Breast epithelium (tissue), 4 donors: ENCODE measurements at regions of chr4 and their contacts with region 1.

Region 1: DNA sequence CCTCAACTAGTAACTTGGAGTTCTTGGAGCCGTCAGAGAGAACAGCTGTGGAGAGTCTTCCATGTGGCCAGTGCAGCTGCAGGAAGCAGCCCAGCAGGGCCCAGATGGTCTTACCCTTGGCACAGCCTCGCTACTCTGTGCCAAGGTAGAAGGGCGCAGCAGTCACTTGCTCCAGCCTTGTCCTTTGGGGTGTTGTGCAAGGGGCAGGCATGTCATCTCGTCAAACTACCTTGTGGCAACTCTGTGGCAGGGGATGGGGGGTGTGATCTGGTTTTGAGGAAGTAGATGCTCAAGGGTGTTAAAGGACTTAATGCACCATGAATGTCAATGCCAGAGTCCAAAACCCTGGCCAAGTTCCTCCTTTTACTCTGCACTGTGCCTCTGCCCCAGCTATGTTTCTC is 34.2 kb upstream of the TBC1D14 start:
- DNase-seq: peak in 1 of 2 donors; percentile 32
- H3K4me3 ChIP-seq: no peak overlapping the region
- H3K27ac ChIP-seq: no peak overlapping the region
- H3K4me1 ChIP-seq: no peaks in the 10 kb centered on the region
- H3K27me3 ChIP-seq: no peaks in the 10 kb centered on the region
- CTCF ChIP-seq: no peak
- POLR2A ChIP-seq: no peak

Region 2: DNA sequence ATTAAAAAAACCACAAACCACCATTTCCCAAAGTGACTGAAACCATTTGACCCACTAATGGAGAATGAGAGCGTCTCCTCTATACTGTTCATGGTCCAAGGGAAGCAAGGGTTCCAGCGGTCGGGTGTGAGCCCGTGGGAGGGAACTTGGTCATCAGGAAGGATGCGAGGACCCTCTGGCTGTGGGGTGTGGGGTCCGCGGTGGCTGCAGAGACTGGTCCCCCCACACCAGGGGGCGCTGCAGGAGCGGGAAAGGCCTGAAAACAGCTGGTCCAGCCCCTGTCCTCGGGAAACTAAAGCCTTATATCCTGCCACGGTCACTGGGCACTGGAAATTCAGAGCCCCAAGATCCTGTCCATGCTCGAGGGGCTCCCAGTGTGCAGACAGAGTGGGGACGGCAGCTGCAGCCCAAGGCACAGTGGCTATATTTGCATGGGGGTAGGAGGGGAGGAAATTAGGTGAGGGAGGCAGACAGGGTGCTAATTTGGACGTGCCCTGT is 155.2 kb before region 1 on chr4:
- intact Hi-C with region 1: loop called (anchors 5 kb)
- DNase-seq: peak; percentile 50 to 87
- H3K4me3 ChIP-seq: peak overlapping the region in 1 of 3 donors; percentile 15
- H3K27ac ChIP-seq: no peak overlapping the region
- H3K4me1 ChIP-seq: peaks cover 0 to 12% of the 10 kb centered on the region in 2 donors
- H3K27me3 ChIP-seq: no peaks in the 10 kb centered on the region
- CTCF ChIP-seq: peak; percentile 76 to 98 (median 98)
- POLR2A ChIP-seq: no peak

Region 3: GRCh38 chr4:6905516-6906445 is 30.4 kb after region 1 on chr4:
- intact Hi-C with region 1: no loop called
- DNase-seq: peak in 1 of 2 donors; percentile 87
- H3K4me3 ChIP-seq: no peak overlapping the region
- H3K27ac ChIP-seq: peak overlapping the region; percentile 57 to 69
- H3K4me1 ChIP-seq: no peaks in the 10 kb centered on the region
- H3K27me3 ChIP-seq: no peaks in the 10 kb centered on the region
- CTCF ChIP-seq: no peak
- POLR2A ChIP-seq: no peak